Adrenal gland (tissue), 19 donors: ENCODE measurements at regions of chr2 and their contacts with region 1.

Region 1: DNA sequence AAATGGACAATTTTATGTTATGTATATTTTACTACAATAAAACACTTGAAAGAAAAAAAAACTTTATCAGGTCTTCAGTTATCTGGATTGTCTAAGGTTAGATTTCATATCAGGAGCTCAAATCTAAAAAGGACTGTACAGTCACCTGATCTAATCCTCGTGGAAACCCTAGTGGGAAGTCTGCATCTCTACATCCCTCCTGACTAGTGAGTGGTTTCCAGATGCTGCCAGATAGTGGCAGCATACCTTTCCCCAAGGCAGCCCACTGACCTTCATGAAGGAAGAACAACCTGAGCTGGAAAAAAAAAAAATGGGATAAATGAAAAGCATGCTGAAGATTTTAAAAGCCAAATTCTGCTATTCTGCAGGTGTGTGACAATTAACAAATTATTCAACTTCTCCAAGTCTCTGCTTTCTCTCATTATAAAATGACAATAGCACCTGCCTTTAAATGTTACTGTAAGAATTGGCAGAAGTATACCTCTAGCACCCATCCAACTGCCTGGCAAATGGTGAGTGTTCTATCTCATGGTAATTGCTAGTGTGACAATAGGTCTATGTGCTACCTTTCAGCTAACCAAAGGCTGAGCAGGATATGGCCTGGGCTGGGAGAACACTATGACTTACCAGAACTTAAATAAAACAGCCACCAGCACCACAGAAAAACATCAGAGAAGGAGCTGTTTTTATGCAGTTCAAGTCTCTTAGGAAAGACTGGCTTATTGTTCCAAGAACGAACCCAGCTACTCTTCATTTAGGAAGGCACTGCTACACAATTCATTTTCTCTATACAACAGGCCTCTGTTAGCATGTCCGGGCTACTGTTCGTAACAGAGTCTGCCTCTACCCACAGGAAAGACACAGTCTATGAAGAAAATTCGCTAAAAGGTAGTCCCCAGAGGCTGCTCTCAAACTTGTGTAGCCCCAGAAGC is 8.6 kb downstream of the CLASP1 start:
- DNase-seq: no peak
- H3K4me3 ChIP-seq: no peak overlapping the region
- H3K27ac ChIP-seq: peak overlapping the region in 1 of 5 donors; percentile 25
- H3K4me1 ChIP-seq: peaks cover 6 to 42% of the 10 kb centered on the region in 2 donors
- H3K27me3 ChIP-seq: no peaks in the 10 kb centered on the region
- CTCF ChIP-seq: no peak
- POLR2A ChIP-seq: no peak

Region 2: GRCh38 chr2:121451398-121451797 is 189.3 kb before region 1 on chr2:
- intact Hi-C with region 1: no loop called
- DNase-seq: no peak
- H3K4me3 ChIP-seq: no peak overlapping the region
- H3K27ac ChIP-seq: no peak overlapping the region
- H3K4me1 ChIP-seq: no peaks in the 10 kb centered on the region
- H3K27me3 ChIP-seq: no peaks in the 10 kb centered on the region
- CTCF ChIP-seq: no peak
- POLR2A ChIP-seq: no peak

Region 3: GRCh38 chr2:121561617-121562268 is 78.9 kb before region 1 on chr2:
- intact Hi-C with region 1: no loop called
- DNase-seq: peak in 4 of 7 donors; percentile 33 to 50 (median 40)
- H3K4me3 ChIP-seq: no peak overlapping the region
- H3K27ac ChIP-seq: peak overlapping the region in 2 of 5 donors; percentile 58 to 66
- H3K4me1 ChIP-seq: peaks cover 5 to 72% of the 10 kb centered on the region in 2 donors
- H3K27me3 ChIP-seq: no peaks in the 10 kb centered on the region
- CTCF ChIP-seq: no peak
- POLR2A ChIP-seq: no peak

Region 4: GRCh38 chr2:121605820-121606733 is 34.6 kb before region 1 on chr2:
- intact Hi-C with region 1: loop called in 1 of 2 experiments (anchors 5 kb)
- DNase-seq: no peak
- H3K4me3 ChIP-seq: no peak overlapping the region
- H3K27ac ChIP-seq: peak overlapping the region in 2 of 5 donors; percentile 27 to 54
- H3K4me1 ChIP-seq: peaks cover 19 to 47% of the 10 kb centered on the region in 2 donors
- H3K27me3 ChIP-seq: no peaks in the 10 kb centered on the region
- CTCF ChIP-seq: no peak
- POLR2A ChIP-seq: no peak